PC-9 (cell line): ENCODE measurements at regions of chr14 and their contacts with region 1.

Region 1: GRCh38 chr14:54981698-54982097 is 45.2 kb downstream of the WDHD1 start:
- DNase-seq: no peak
- H3K4me3 ChIP-seq: no peak overlapping the region
- H3K27ac ChIP-seq: no peak overlapping the region
- H3K4me1 ChIP-seq: no peaks in the 10 kb centered on the region
- H3K27me3 ChIP-seq: no peaks in the 10 kb centered on the region
- CTCF ChIP-seq: peak; percentile 71

Region 2: GRCh38 chr14:54396493-54397335 is 585.0 kb before region 1 on chr14 and contains the start of gene CDKN3:
- CTCF ChIA-PET with region 1: no interaction called
- POLR2A ChIA-PET with region 1: no interaction called
- intact Hi-C with region 1: no loop called
- DNase-seq: peak; percentile 97
- H3K4me3 ChIP-seq: peak within 1 kb of the TSS; percentile 96
- H3K27ac ChIP-seq: 0 out of 2 replicates have a peak within 1 kb of the TSS, but pooled peaks have one; percentile 21
- H3K4me1 ChIP-seq: peaks cover 22% of the 10 kb centered on the region
- H3K27me3 ChIP-seq: no peaks in the 10 kb centered on the region
- CTCF ChIP-seq: peak; percentile 64
- total RNA-seq, gene CDKN3: 61.1 and 105 TPM in 2 replicates

Region 3: DNA sequence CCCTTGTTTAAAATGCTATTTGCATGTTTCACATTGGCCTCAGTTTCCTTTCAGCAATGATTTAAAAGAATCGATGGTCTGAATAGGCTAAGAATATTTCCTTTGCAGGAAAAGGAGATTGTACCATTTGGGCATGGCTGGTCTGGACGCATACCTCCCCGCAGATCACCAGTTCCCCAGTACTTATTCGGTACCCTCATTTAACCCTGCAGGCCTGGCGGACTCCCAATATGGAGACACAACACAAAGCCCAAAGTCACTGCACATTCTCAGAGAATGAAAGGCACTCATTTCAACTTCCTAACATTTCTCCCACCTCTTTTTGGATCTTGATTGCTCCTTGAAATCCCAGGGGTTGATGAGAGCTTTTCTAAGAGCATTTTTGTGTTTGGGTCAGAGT is 232.0 kb before region 1 on chr14:
- CTCF ChIA-PET with region 1: no interaction called
- POLR2A ChIA-PET with region 1: no interaction called
- intact Hi-C with region 1: no loop called
- DNase-seq: no peak
- H3K4me3 ChIP-seq: no peak overlapping the region
- H3K27ac ChIP-seq: no peak overlapping the region
- H3K4me1 ChIP-seq: no peaks in the 10 kb centered on the region
- H3K27me3 ChIP-seq: no peaks in the 10 kb centered on the region
- CTCF ChIP-seq: no peak

Region 4: DNA sequence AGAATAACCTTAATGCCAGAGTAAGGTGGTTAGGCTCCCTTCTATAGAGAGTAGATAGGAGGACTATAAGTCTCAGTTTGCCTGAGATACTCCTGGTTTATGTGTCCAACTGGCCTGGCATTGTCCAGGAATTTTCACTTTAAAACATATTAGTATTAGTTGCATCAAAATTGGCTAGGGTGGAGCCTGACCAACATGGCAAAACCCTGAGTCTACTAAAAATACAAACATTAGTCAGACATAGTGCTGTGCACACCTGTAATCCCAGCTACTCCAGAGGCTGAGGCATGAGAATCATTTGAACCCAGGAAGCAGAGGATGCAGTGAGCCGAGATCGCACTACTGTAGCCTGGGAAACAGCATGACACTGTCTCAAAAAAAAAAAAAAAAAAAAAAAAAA is 33.3 kb after region 1 on chr14:
- CTCF ChIA-PET with region 1: interaction called, 13 read pairs
- POLR2A ChIA-PET with region 1: no interaction called
- intact Hi-C with region 1: no loop called
- DNase-seq: no peak
- H3K4me3 ChIP-seq: no peak overlapping the region
- H3K27ac ChIP-seq: no peak overlapping the region
- H3K4me1 ChIP-seq: no peaks in the 10 kb centered on the region
- H3K27me3 ChIP-seq: no peaks in the 10 kb centered on the region
- CTCF ChIP-seq: no peak

Region 5: DNA sequence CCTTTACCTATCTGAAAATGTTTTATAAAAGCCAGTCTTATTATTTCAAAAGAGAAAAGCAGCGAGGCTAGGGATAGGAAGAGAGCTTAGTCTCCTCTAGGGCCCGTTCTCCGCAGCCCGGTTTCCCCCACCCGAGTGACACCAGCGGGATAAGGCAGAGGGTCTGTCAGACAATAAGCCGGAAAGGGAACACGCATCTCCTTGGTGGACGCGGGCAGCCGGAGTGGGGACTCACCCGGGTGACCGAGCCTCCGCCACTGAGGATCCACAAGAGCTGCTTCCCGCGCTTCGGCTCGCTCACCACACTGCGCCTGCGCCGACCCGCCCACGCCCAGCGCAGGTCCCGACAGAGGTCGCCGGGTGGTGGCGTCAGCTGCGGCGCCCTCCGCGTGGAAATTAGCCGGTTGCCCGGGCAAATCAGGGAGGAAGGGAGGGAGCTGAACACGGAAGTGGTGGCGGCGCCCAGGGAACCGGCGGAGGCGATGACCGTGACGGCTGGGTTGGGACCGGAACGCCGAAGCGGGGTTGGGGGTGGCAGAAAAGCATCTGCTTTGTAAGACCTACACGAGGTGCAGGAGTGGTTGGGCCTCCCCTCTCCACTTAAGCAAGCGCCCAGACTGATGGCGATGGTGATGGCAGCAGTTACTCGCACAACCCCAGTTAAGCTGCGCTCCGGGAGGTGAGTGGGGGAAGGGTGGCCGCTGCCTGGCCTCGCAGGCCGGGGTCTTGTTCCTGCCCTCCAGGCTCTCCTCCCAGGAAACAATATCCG is 45.3 kb after region 1 on chr14 and contains the starts of genes SOCS4 and WDHD1:
- CTCF ChIA-PET with region 1: no interaction called
- POLR2A ChIA-PET with region 1: interaction called, 13 read pairs
- intact Hi-C with region 1: no loop called
- DNase-seq: peak; percentile 83 to 96
- H3K4me3 ChIP-seq: peak within 1 kb of the TSS; percentile 80
- H3K27ac ChIP-seq: peak within 1 kb of the TSS; percentile 45
- H3K4me1 ChIP-seq: peaks cover 26% of the 10 kb centered on the region
- H3K27me3 ChIP-seq: no peaks in the 10 kb centered on the region
- CTCF ChIP-seq: no peak
- total RNA-seq, gene SOCS4: 25.3 and 33.4 TPM in 2 replicates
- total RNA-seq, gene WDHD1: 27.9 and 34.3 TPM in 2 replicates